RWPE1 (cell line): ENCODE measurements at regions of chr6 and their contacts with region 1.

Region 1: DNA sequence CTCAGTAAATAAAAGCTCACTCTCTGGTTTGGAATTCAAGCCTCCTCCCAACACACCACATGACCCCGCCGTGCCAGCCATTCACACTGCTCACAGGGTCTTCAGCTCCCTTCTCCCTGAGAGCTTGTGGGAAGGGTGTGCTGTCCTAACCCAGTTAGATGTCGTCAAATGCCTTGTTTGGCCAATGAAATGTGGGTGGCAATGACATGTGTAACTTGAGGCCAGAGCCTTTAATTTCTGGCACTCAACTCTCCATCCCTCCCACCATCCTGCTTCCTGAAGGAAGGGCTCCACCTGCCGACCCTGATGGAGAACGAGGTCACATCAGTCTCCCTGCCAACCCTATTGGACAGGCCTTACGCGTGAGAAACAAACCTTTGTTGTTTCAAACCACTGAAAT is 224.5 kb upstream of the AGPAT4 start:
- DNase-seq: peak; percentile 68
- H3K27ac ChIP-seq: no peak overlapping the region
- CTCF ChIP-seq: peak; percentile 58

Region 2: DNA sequence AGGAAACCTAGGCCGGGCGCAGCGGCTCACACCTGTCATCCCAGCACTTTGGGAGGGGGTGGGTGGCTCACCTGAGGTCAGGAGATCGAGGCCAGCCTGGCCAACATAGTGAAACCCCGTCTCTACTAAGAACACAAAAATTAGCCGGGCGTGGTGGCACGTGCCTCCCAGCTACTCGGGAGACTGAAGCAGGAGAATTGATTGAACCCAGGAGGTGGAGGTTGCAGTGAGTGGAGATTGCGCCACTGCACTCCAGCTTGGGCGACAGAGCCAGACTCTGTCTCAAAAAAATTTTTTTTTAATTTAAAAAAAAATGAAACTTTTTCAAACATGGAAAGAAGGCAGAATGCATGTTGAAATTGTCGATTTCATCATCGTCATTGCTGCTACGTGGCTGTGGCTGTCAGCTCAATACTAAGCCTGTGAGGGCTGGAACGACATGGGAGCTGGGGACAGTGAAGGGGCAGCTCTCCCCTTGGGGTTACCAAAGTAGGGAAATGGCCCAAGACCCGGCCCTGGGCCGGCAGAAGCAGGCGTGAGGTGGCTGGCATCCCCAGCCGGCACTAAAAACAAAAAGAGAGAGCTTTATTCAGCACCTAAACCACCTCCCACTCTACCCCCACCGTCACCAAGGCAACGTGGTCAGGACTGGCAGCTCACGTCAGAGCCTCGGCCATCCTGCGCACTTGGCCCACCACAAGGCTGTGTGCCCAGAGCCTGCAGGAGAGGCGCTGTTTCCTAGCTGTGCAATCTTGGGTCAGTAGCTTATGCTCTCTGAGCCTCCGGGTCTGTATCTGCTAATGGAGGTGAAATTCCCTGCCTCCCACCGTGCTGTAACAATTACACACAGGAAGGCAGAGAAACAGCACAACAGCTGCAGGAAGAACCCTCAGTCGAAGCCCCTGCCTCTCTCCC is 255.3 kb before region 1 on chr6:
- CTCF ChIA-PET with region 1: no interaction called
- POLR2A ChIA-PET with region 1: no interaction called
- DNase-seq: no peak
- H3K27ac ChIP-seq: no peak overlapping the region
- CTCF ChIP-seq: no peak

Region 3: GRCh38 chr6:161393839-161394364 is 104.5 kb before region 1 on chr6:
- CTCF ChIA-PET with region 1: interaction called, 11 read pairs
- POLR2A ChIA-PET with region 1: no interaction called
- DNase-seq: peak; percentile 89
- H3K27ac ChIP-seq: no peak overlapping the region
- CTCF ChIP-seq: peak; percentile 72

Region 4: DNA sequence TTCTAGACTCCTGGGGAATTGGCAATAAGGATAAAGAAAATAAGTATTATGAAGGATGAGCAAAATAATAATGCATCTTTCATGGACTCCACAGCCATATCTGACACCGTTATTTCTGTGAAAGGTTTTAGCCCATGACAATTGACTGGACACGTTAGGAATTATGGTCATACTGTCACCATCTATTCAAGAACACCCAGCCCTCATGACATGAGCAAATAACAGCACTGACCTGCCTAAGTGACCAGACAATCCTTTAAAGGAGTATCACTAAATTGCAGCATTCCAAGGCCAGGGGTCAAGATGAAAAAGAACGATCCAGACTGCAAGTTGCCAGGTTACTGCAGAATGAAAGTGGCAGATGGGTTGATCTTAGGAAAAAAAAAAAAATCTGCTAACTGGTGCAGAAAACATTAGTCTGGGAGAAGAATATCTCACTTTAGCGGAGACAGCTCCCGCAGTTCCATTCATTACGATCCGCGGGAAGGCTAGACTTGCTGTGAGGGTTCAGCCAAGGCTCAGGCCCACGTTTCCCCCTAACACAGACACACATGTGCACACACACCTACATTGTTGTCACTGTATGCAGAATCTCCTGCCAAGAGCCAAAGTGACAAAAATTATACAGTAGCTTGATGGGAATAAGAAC is 13.2 kb after region 1 on chr6:
- CTCF ChIA-PET with region 1: no interaction called
- POLR2A ChIA-PET with region 1: no interaction called
- DNase-seq: no peak
- H3K27ac ChIP-seq: no peak overlapping the region
- CTCF ChIP-seq: no peak